ENCODE measurements at regions of chr18 and their contacts with region 1.

Region 1: GRCh38 chr18:31241900-31242409 is 76.0 kb upstream of the DSG1 start:
- DNase-seq: peak; percentile 63 to 95
- H3K4me3 ChIP-seq: no peak overlapping the region; the same call in 1 of the 2 replicates
- H3K27ac ChIP-seq: peak overlapping the region; percentile 94
- H3K4me1 ChIP-seq: peaks cover 45% of the 10 kb centered on the region
- H3K27me3 ChIP-seq: no peaks in the 10 kb centered on the region
- CTCF ChIP-seq: peak; percentile 80

Region 2: DNA sequence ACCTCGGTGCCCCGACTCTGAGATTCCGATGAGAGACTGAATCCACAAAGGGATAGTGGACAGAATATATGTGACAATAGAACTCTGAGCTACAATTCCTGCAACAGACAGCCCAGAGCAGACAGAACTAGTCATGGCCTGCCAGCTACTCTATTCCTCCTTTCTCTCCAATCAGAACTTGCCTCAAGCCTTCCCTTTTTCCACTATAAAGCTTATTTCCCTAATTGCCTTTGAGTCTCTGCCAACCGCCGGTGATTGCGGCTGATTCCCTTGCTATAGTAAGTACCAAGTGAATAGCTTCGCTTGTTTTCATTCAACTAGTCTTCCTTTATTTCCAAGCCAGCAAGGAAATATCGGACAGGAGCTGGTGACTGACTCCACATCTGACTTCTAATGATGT is 296.2 kb before region 1 on chr18:
- CTCF ChIA-PET with region 1: no interaction called
- POLR2A ChIA-PET with region 1: no interaction called
- intact Hi-C with region 1: no loop called
- DNase-seq: no peak
- H3K4me3 ChIP-seq: no peak overlapping the region
- H3K27ac ChIP-seq: no peak overlapping the region
- H3K4me1 ChIP-seq: no peaks in the 10 kb centered on the region
- H3K27me3 ChIP-seq: no peaks in the 10 kb centered on the region
- CTCF ChIP-seq: no peak

Region 3: DNA sequence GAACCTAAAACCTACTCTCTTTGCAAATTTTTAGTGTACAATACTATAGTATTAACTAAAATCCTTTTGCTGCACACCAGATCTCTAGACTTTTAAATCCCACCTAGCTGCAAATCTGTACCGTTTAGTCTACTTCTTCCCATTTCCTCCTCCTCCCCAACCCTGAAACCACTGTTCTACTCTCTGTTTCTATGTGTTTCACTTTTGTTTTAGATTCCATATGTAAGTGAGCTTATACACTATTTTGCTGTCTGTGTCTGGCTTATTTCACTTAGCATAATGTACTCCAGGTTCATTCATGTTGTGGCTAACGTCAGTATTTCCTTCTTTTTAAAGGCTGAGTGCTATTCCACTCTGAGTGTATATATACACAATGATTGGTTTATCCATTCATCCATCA is 121.4 kb before region 1 on chr18:
- CTCF ChIA-PET with region 1: no interaction called
- POLR2A ChIA-PET with region 1: interaction called, 12 read pairs
- intact Hi-C with region 1: no loop called
- DNase-seq: no peak
- H3K4me3 ChIP-seq: no peak overlapping the region
- H3K27ac ChIP-seq: no peak overlapping the region
- H3K4me1 ChIP-seq: no peaks in the 10 kb centered on the region
- H3K27me3 ChIP-seq: no peaks in the 10 kb centered on the region
- CTCF ChIP-seq: no peak

Region 4: GRCh38 chr18:31206787-31207381 is 35.1 kb before region 1 on chr18:
- CTCF ChIA-PET with region 1: no interaction called
- POLR2A ChIA-PET with region 1: no interaction called
- intact Hi-C with region 1: loop called (anchors 2 kb)
- DNase-seq: peak; percentile 78 to 87
- H3K4me3 ChIP-seq: no peak overlapping the region; the same call in 1 of the 2 replicates
- H3K27ac ChIP-seq: peak overlapping the region; percentile 48
- H3K4me1 ChIP-seq: peaks cover 26% of the 10 kb centered on the region
- H3K27me3 ChIP-seq: no peaks in the 10 kb centered on the region
- CTCF ChIP-seq: peak; percentile 46; the same call in 1 of the 2 replicates

Region 5: DNA sequence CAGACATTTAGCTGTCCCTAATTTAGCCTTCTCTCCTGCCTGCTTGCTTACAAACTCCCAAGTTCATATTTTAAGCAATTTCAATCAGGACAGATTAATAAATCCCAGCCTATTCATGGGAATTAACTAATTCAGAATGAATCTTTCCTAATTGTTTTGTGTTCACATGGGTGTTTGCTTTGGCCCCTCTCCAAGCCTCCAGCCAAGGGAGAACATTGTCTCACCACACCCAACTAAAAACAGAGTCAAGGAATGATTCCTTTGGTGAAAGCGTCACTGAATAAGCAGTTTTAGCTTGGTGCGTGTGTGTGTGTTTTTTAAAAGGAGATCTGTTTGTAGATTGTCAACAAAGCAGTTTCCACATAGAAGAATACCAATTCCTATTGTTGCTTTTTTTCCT is 33.0 kb after region 1 on chr18:
- CTCF ChIA-PET with region 1: no interaction called
- POLR2A ChIA-PET with region 1: no interaction called
- intact Hi-C with region 1: loop called (anchors 2 kb)
- DNase-seq: peak; percentile 44 to 78
- H3K4me3 ChIP-seq: no peak overlapping the region
- H3K27ac ChIP-seq: peak overlapping the region; percentile 54
- H3K4me1 ChIP-seq: peaks cover 28% of the 10 kb centered on the region
- H3K27me3 ChIP-seq: no peaks in the 10 kb centered on the region
- CTCF ChIP-seq: no peak

Region 6: GRCh38 chr18:31512203-31512764 is 270.3 kb after region 1 on chr18:
- CTCF ChIA-PET with region 1: no interaction called
- POLR2A ChIA-PET with region 1: no interaction called
- intact Hi-C with region 1: loop called (anchors 5 kb)
- DNase-seq: peak; percentile 72 to 84
- H3K4me3 ChIP-seq: no peak overlapping the region
- H3K27ac ChIP-seq: peak overlapping the region; percentile 95
- H3K4me1 ChIP-seq: peaks cover 46% of the 10 kb centered on the region
- H3K27me3 ChIP-seq: no peaks in the 10 kb centered on the region
- CTCF ChIP-seq: no peak

Measured in PC-9 (cell line).